Left ventricle myocardium inferior (tissue), 1 donor: ENCODE measurements at regions of chr4 and their contacts with region 1.

Region 1: DNA sequence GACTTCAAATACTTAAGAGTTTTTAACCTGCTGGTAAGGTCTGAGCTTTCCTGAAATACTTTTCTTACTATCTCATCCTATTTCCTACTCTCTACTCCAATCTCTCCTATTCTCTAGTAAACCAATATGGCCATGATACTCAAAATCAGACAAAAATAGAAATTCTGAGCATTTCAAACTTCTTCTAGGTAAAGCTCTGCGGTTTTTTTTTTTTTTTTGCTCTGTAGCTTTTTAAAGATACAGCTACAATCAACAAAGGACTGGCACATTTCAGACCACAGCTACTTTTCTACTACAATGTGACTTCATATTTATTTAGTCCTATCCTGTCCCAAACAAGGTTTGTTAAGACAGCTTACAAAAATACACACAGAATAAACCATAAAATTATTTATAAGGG is 31.1 kb downstream of the MAML3 start:
- DNase-seq: no peak
- H3K4me3 ChIP-seq: no peak overlapping the region
- H3K27ac ChIP-seq: no peak overlapping the region
- H3K4me1 ChIP-seq: peaks cover 5% of the 10 kb centered on the region
- H3K27me3 ChIP-seq: no peaks in the 10 kb centered on the region
- CTCF ChIP-seq: no peak

Region 2: GRCh38 chr4:140281828-140282552 is 159.1 kb after region 1 on chr4:
- intact Hi-C with region 1: no loop called
- DNase-seq: no peak
- H3K4me3 ChIP-seq: no peak overlapping the region
- H3K27ac ChIP-seq: no peak overlapping the region
- H3K4me1 ChIP-seq: no peaks in the 10 kb centered on the region
- H3K27me3 ChIP-seq: peaks cover 4% of the 10 kb centered on the region
- CTCF ChIP-seq: no peak

Region 3: DNA sequence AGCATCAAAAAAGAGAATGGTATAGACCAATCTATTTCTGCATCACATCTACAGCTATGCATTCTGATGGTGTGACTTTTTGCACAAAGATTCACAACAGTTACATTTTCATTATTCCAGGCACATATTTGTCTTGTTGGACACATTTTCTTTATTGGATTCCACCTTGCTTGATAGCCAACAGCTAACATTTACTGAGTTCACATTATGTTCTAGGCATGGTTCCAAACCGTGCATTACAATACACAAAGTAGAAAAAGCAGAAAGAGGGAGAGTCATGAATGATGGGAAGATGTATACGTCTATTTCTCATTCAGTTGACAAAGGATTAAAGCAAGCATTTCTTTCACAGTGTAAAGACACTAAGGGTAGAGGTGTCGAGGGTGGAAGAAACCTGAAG is 327.5 kb after region 1 on chr4:
- intact Hi-C with region 1: loop called (anchors 5 kb)
- DNase-seq: no peak
- H3K4me3 ChIP-seq: no peak overlapping the region
- H3K27ac ChIP-seq: no peak overlapping the region
- H3K4me1 ChIP-seq: no peaks in the 10 kb centered on the region
- H3K27me3 ChIP-seq: no peaks in the 10 kb centered on the region
- CTCF ChIP-seq: no peak